ENCODE measurements at regions of chr5 and their contacts with region 1.

Region 1: GRCh38 chr5:150469718-150470469 is 20.4 kb upstream of the RPS14 start:
- DNase-seq: peak; percentile 98
- H3K4me3 ChIP-seq: no peak overlapping the region
- H3K27ac ChIP-seq: peak overlapping the region; percentile 76
- H3K4me1 ChIP-seq: peaks cover 55% of the 10 kb centered on the region
- H3K27me3 ChIP-seq: no peaks in the 10 kb centered on the region

Region 2: GRCh38 chr5:150009671-150010387 is 460.1 kb before region 1 on chr5:
- in situ Hi-C with region 1: no loop called
- DNase-seq: peak; percentile 62
- H3K4me3 ChIP-seq: no peak overlapping the region
- H3K27ac ChIP-seq: peak overlapping the region; percentile 32
- H3K4me1 ChIP-seq: peaks cover 13% of the 10 kb centered on the region
- H3K27me3 ChIP-seq: no peaks in the 10 kb centered on the region

Region 3: GRCh38 chr5:150234576-150235499 is 235.1 kb before region 1 on chr5:
- in situ Hi-C with region 1: no loop called
- DNase-seq: no peak
- H3K4me3 ChIP-seq: no peak overlapping the region
- H3K27ac ChIP-seq: no peak overlapping the region
- H3K4me1 ChIP-seq: no peaks in the 10 kb centered on the region
- H3K27me3 ChIP-seq: no peaks in the 10 kb centered on the region

Region 4: DNA sequence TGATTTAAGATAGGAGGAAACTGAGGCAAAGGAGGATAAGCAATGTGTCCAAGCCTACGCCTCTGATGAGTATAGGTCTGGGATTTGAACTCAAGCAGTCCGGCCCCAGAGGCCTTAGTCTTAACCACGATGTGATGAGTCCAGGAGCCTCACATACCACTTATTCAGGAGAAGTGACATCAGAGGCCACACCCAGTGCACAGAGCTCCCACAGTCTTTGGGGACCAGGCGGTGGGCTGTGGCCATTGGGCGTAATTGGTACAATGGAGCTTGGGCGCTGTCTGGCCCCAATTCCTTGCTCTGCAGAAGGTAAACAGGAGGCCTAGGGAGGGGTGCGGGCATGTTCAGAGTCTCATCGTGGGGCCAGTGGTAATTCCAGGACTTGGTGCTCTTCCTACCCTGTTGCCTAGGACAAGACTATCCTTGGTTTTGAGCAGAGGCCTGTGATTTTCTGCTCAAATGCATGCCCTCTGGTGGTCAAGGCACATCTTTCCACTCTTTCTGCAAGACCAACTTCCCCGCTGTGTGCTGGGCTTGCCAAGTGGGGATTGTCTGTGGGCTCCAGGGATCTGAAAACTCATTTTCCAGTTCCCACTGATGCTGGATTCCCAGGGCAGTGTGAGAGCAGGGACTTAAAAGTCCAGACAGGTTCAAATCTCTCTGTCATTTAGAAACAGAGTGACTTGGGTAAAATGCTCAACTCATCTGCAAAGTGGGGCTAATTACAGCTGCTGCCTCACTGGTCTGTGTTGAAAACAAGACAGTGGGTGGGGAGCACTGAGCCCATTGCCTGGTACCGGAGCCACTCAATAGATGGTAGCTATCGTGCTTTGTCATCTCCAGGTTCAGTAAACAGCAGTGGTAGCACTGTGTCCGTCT is 53.8 kb after region 1 on chr5:
- in situ Hi-C with region 1: loop called (anchors 5 kb)
- DNase-seq: peak; percentile 78
- H3K4me3 ChIP-seq: no peak overlapping the region
- H3K27ac ChIP-seq: peak overlapping the region; percentile 6; the same call in 1 of the 2 replicates
- H3K4me1 ChIP-seq: peaks cover 36% of the 10 kb centered on the region
- H3K27me3 ChIP-seq: no peaks in the 10 kb centered on the region